HAP-1 (cell line): ENCODE measurements at regions of chr10 and their contacts with region 1.

Region 1: GRCh38 chr10:7872041-7872442 is 53.7 kb downstream of the TAF3 start:
- DNase-seq: peak in 1 of 2 experiments; percentile 36
- H3K4me3 ChIP-seq: peak overlapping the region; percentile 13
- H3K4me1 ChIP-seq: no peaks in the 10 kb centered on the region
- H3K27me3 ChIP-seq: no peaks in the 10 kb centered on the region

Region 2: GRCh38 chr10:9294865-9295264 is 1422.8 kb after region 1 on chr10:
- in situ Hi-C with region 1: loop called (anchors 25 kb)
- DNase-seq: no peak
- H3K4me3 ChIP-seq: no peak overlapping the region
- H3K4me1 ChIP-seq: no peaks in the 10 kb centered on the region
- H3K27me3 ChIP-seq: no peaks in the 10 kb centered on the region